GM12878 (cell line): ENCODE measurements at regions of chr20 and their contacts with region 1.

Region 1: DNA sequence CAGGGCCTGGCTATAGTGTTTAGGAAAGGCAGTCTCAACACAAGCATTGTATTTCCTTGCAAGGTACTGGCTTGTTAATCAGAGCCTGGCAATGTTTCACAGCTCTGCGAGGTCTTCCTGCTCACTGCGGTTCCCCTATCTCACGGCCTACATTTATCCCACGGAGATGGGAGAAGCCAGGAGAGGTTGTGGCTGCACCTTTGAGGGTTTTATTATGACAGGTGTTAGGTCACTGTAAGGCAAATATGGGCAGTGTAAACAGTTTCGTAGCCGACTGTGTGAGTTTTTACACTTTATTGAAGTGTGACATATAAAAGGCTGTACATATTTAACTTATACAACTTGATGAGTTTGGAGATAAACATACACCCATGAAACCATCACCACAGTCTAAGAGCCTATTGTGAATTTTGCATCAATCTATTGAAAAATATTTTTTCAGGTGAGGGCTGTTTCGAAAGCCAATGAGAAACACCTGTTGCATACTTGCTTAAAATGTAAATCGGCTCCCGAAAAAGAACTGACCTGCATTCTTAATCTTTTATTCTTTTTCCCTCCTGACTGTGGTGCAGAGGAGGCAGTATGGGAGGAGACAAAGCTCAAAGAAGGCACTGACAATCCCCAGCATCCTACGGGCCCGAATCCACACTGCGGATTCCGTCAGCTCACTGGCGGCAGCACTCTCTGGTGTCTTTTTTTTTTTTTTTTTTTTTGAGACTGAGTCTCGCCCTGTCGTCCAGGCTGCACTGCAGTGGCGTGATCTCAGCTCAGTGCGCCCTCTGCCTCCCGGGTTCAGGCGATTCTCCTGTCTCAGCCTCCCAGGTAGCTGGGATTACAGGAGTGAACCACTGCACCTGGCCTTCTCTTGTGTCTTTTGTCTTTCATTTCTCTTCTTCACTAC is 7.5 kb upstream of the RBM38 start:
- DNase-seq: no peak
- ATAC-seq: no peak
- H3K4me3 ChIP-seq: no peak overlapping the region
- H3K27ac ChIP-seq: no peak overlapping the region
- H3K4me1 ChIP-seq: peaks cover 7% of the 10 kb centered on the region
- H3K27me3 ChIP-seq: no peaks in the 10 kb centered on the region
- CTCF ChIP-seq: no peak
- EP300 ChIP-seq: no peak
- POLR2A ChIP-seq: no peak
- RAD21 ChIP-seq: no peak

Region 2: DNA sequence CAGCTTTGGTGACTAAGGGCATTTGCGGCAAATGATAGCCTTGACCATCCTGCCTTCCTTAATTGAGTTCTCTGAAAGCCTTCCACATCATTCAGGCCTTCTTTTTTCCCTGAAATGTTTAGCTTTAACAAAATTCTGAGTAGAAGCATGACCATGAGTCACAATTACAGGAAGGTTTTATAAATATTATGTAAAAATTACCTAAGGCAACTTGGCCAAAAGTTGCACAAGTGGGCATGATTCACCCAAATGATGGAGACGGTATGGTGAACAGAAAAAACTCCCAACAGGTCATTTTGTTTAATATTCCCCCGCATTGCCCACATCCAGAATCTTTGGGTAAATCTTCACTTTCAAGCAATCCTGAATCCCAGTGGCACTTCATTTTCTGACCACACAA is 1098.2 kb before region 1 on chr20:
- CTCF ChIA-PET with region 1: no interaction called
- POLR2A ChIA-PET with region 1: no interaction called
- RAD21 ChIA-PET with region 1: no interaction called
- SMC1A ChIA-PET with region 1: no interaction called
- in situ Hi-C with region 1: no loop called
- intact Hi-C with region 1: no loop called
- DNase-seq: no peak
- ATAC-seq: no peak
- H3K4me3 ChIP-seq: no peak overlapping the region
- H3K27ac ChIP-seq: no peak overlapping the region
- H3K4me1 ChIP-seq: no peaks in the 10 kb centered on the region
- H3K27me3 ChIP-seq: no peaks in the 10 kb centered on the region
- CTCF ChIP-seq: no peak
- EP300 ChIP-seq: no peak
- POLR2A ChIP-seq: no peak
- RAD21 ChIP-seq: no peak

Region 3: GRCh38 chr20:57061058-57061900 is 322.4 kb before region 1 on chr20:
- CTCF ChIA-PET with region 1: no interaction called
- POLR2A ChIA-PET with region 1: no interaction called
- RAD21 ChIA-PET with region 1: no interaction called
- SMC1A ChIA-PET with region 1: no interaction called
- in situ Hi-C with region 1: no loop called
- intact Hi-C with region 1: no loop called
- DNase-seq: no peak
- ATAC-seq: no peak
- H3K4me3 ChIP-seq: no peak overlapping the region
- H3K27ac ChIP-seq: no peak overlapping the region
- H3K4me1 ChIP-seq: no peaks in the 10 kb centered on the region
- H3K27me3 ChIP-seq: peaks cover 0 to 3% of the 10 kb centered on the region in 2 experiments; a peak in 3 of 4 replicates
- CTCF ChIP-seq: peak in 2 of 3 experiments; percentile 9 to 37; a peak in 1 of 6 replicates
- EP300 ChIP-seq: no peak
- POLR2A ChIP-seq: no peak
- RAD21 ChIP-seq: 0 out of 2 replicates have a peak, but pooled peaks have one; percentile 8

Region 4: GRCh38 chr20:57432874-57433491 is 49.3 kb after region 1 on chr20:
- CTCF ChIA-PET with region 1: interaction called, 10 read pairs
- POLR2A ChIA-PET with region 1: interaction called, 3 read pairs
- RAD21 ChIA-PET with region 1: interaction called, 3 read pairs
- SMC1A ChIA-PET with region 1: interaction called, 9 read pairs
- in situ Hi-C with region 1: no loop called
- intact Hi-C with region 1: no loop called
- DNase-seq: peak; percentile 76
- ATAC-seq: peak; percentile 94
- H3K4me3 ChIP-seq: 0 out of 2 replicates have a peak overlapping the region, but pooled peaks have one; percentile 26
- H3K27ac ChIP-seq: peak overlapping the region; percentile 57
- H3K4me1 ChIP-seq: peaks cover 39% of the 10 kb centered on the region
- H3K27me3 ChIP-seq: no peaks in the 10 kb centered on the region
- CTCF ChIP-seq: no peak
- EP300 ChIP-seq: peak; percentile 41 to 56; a peak in 2 of 4 replicates
- POLR2A ChIP-seq: no peak
- RAD21 ChIP-seq: no peak

Region 5: DNA sequence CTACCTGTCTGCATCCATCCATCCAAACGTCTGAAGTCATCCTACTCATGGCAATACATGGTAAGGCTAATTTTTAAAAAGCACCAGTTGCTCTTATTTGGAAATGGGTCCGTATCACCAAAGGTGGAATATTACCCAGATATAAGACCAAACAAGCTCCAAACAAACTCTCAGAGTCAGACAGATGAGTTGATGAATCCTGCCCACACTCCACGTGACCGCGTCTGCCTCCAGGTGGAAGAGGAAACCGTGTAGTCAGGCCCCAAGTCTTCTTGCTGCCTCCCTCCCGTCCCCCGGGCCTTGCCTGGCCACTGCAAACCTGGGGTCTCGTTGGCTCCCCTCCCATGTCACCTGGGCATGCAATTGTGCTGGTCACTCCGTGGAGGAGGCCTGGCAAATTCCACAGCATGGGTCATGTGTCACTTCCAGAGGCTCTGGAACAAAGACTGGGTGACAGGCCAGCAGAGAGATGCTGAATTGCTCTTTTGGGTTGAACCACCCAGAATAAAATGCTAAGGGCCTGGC is 109.5 kb after region 1 on chr20:
- CTCF ChIA-PET with region 1: interaction called, 47 read pairs
- POLR2A ChIA-PET with region 1: interaction called, 4 read pairs
- RAD21 ChIA-PET with region 1: interaction called, 20 read pairs
- SMC1A ChIA-PET with region 1: interaction called, 48 read pairs
- in situ Hi-C with region 1: no loop called
- intact Hi-C with region 1: loop called (anchors 1 kb)
- DNase-seq: no peak
- ATAC-seq: no peak
- H3K4me3 ChIP-seq: no peak overlapping the region
- H3K27ac ChIP-seq: no peak overlapping the region
- H3K4me1 ChIP-seq: no peaks in the 10 kb centered on the region
- H3K27me3 ChIP-seq: peaks cover 0 to 2% of the 10 kb centered on the region in 2 experiments; a peak in 1 of 4 replicates
- CTCF ChIP-seq: no peak
- EP300 ChIP-seq: no peak
- POLR2A ChIP-seq: no peak
- RAD21 ChIP-seq: no peak

Region 6: GRCh38 chr20:57498425-57499400 is 115.0 kb after region 1 on chr20:
- CTCF ChIA-PET with region 1: interaction called, 47 read pairs
- POLR2A ChIA-PET with region 1: interaction called, 4 read pairs
- RAD21 ChIA-PET with region 1: interaction called, 20 read pairs
- SMC1A ChIA-PET with region 1: interaction called, 48 read pairs
- in situ Hi-C with region 1: no loop called
- intact Hi-C with region 1: loop called (anchors 1 kb)
- DNase-seq: no peak
- ATAC-seq: peak; percentile 93
- H3K4me3 ChIP-seq: no peak overlapping the region
- H3K27ac ChIP-seq: no peak overlapping the region
- H3K4me1 ChIP-seq: peaks cover 21% of the 10 kb centered on the region
- H3K27me3 ChIP-seq: peaks cover 0 to 2% of the 10 kb centered on the region in 2 experiments; a peak in 1 of 4 replicates
- CTCF ChIP-seq: peak; percentile 54 to 74 (median 70)
- EP300 ChIP-seq: no peak
- POLR2A ChIP-seq: no peak
- RAD21 ChIP-seq: peak; percentile 60

Region 7: GRCh38 chr20:58028123-58028522 is 644.4 kb after region 1 on chr20:
- CTCF ChIA-PET with region 1: no interaction called
- POLR2A ChIA-PET with region 1: no interaction called
- RAD21 ChIA-PET with region 1: no interaction called
- SMC1A ChIA-PET with region 1: no interaction called
- in situ Hi-C with region 1: no loop called
- intact Hi-C with region 1: no loop called
- DNase-seq: no peak
- ATAC-seq: no peak
- H3K4me3 ChIP-seq: no peak overlapping the region
- H3K27ac ChIP-seq: no peak overlapping the region
- H3K4me1 ChIP-seq: no peaks in the 10 kb centered on the region
- H3K27me3 ChIP-seq: peaks cover 0 to 1% of the 10 kb centered on the region in 2 experiments; a peak in 1 of 4 replicates
- CTCF ChIP-seq: 0 out of 6 replicates have a peak, but pooled peaks of 1 of the 3 experiments have one; percentile 20
- EP300 ChIP-seq: no peak
- POLR2A ChIP-seq: no peak
- RAD21 ChIP-seq: no peak